ENCODE measurements at regions of chr1 and their contacts with region 1.

Region 1: DNA sequence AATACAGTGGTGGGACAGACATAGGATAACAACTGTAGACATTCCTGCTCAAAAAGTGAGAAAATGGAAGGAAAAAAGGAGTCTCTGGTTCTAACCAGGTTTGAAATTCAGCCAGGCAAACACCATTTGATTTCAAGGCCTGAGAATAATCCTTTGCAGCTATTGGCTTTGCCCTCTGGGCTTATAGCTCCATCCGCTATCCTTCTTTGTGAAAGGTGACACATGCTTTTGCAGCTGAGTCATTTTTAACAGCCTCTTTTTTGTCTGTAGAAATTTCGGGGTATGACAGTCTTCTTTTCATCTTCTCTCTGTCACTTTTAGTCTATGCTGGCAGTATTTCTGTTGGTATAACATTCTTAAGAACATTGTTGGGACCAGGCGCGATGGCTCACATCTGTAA is 16.2 kb downstream of the SDHC start:
- DNase-seq: no peak
- H3K27ac ChIP-seq: no peak overlapping the region
- CTCF ChIP-seq: no peak

Region 2: DNA sequence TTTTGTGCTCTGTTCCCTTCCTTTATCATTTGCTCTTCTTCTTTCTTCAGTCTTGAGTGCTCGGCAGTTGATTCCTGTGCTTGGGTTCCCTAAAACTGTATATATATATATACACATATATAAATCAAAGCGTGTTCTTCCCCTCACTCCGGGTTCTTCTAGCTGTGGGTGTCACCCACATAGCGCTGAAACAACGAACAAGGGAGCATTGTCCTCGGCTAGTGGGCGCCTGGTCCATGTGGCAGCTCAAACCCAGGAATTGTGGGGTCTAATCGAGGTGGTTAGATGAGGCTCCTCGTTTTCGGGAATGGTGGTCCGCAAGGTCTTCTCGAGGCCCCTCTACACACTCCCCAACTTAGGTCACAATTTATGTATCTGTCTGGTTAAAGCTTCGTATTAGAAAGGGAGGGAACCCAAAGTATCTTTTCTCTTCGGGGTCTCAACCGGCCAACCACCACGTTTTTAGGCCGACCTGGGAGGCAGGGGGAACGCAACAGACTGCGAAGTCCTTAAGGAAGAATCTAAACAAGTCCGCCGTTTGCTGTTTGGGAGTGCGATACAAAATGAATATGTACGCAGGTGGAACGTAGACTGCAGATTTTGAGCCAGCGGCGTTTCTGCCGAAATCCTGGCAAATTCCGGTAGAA is 16.7 kb before region 1 on chr1:
- CTCF ChIA-PET with region 1: interaction called, 3 read pairs
- POLR2A ChIA-PET with region 1: interaction called, 10 read pairs
- DNase-seq: no peak
- H3K27ac ChIP-seq: peak overlapping the region; percentile 86
- CTCF ChIP-seq: no peak

Region 3: DNA sequence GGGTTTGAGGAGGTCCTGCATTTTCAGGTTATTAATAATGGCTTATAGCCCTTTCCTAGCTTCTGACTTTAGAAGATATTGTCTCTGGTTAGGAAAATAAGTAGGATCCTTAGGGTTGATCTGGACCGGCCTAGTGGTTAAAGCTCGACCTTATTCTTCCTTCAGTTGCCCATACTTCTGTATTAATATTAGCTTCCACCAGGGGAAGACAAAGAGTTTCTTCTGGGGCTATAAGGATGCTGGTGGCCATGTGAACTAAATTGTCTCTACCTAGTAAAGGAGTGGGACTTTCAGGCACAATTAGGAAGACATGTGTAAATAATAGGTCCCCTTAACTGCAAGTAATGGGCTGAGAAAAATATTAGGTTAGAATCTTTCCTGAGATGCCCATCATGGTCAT is 154.3 kb after region 1 on chr1:
- CTCF ChIA-PET with region 1: no interaction called
- POLR2A ChIA-PET with region 1: no interaction called
- DNase-seq: no peak
- H3K27ac ChIP-seq: no peak overlapping the region
- CTCF ChIP-seq: no peak

Measured in RWPE1 (cell line).